Endothelial cell of umbilical vein (primary cell): ENCODE measurements at regions of chr3 and their contacts with region 1.

Region 1: DNA sequence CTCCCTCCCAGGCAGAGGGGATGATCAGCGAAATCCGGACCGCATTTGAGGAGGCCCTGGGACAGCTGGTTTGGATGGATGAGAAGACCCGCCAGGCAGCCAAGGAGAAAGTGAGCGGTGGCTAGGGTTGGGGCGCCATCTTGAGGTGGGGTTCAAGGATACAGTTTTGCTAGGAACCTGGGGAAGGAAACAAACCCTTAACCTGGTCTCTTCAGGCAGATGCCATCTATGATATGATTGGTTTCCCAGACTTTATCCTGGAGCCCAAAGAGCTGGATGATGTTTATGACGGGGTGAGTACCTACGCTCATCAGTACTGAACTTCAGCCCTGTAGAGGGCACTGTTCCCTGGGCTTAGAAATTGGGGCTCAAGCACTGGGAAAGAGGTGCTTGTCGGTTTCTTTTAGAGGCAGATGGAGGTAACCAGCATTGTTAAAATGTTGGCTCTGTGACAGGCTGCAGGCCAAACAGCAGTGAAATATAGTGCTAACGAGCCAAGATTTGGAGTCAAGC is 9.6 kb upstream of the PSMD2 start:
- DNase-seq: peak; percentile 52
- H3K4me3 ChIP-seq: no peak overlapping the region
- H3K27ac ChIP-seq: no peak overlapping the region
- H3K4me1 ChIP-seq: no peaks in the 10 kb centered on the region
- H3K27me3 ChIP-seq: peaks cover 0 to 3% of the 10 kb centered on the region in 2 experiments
- CTCF ChIP-seq: peak; percentile 67
- POLR2A ChIP-seq: no peak

Region 2: DNA sequence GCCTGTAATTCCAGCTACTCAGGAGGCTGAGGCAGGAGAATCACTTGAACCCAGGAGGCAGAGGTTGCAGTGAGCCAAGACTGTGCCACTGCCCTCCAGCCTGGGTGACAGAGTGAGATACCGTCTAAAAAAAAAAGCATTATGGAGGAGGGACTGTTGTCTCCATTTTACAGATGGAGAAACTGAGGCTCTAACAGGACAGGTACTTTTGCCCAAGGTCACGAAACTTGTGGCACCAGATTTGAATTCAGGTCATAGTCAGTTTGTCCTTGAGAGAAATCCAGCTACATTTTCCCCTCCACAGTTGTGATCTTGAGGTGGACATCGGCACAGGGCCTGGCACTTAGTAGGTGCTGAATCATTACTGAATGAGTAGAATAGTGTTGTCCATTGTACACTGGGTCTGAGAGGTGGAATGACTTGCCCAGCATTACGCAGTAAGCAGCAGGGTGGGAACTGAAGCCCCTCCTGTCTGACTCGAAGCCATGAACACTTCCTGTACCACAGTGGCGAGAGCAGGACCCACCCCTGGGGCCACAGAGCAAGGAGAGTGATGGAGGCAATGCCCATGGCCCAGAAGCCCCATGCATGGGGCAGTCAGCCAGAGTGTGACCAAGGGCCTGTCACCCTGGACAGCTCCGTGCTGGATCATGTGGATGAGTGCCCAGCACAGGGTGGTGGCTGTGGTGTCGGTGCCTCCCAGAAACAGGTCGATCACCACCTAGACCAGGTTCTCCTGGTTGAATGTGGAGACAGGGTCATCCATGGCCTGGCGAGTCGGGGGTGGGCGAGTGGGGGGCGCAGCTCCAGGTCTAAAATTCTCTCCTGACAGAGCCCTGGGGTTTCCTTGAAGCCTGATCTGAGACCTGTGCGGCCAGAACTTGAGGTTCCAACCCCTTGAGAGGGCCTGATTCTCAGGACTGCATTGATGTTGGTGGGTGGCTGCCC is 384.4 kb before region 1 on chr3:
- CTCF ChIA-PET with region 1: interaction called, 11 read pairs
- POLR2A ChIA-PET with region 1: no interaction called
- dilution Hi-C with region 1: no loop called
- intact Hi-C with region 1: no loop called
- DNase-seq: no peak
- H3K4me3 ChIP-seq: no peak overlapping the region
- H3K27ac ChIP-seq: no peak overlapping the region
- H3K4me1 ChIP-seq: no peaks in the 10 kb centered on the region
- H3K27me3 ChIP-seq: no peaks in the 10 kb centered on the region
- CTCF ChIP-seq: no peak
- POLR2A ChIP-seq: no peak

Region 3: GRCh38 chr3:183966251-183966801 is 323.2 kb before region 1 on chr3:
- CTCF ChIA-PET with region 1: no interaction called
- POLR2A ChIA-PET with region 1: no interaction called
- dilution Hi-C with region 1: no loop called
- intact Hi-C with region 1: no loop called
- DNase-seq: no peak
- H3K4me3 ChIP-seq: no peak overlapping the region
- H3K27ac ChIP-seq: no peak overlapping the region
- H3K4me1 ChIP-seq: no peaks in the 10 kb centered on the region
- H3K27me3 ChIP-seq: no peaks in the 10 kb centered on the region
- CTCF ChIP-seq: no peak
- POLR2A ChIP-seq: no peak

Region 4: GRCh38 chr3:184040010-184040409 is 249.5 kb before region 1 on chr3:
- CTCF ChIA-PET with region 1: no interaction called
- POLR2A ChIA-PET with region 1: no interaction called
- dilution Hi-C with region 1: no loop called
- intact Hi-C with region 1: loop called (anchors 10 kb)
- DNase-seq: peak; percentile 22
- H3K4me3 ChIP-seq: no peak overlapping the region
- H3K27ac ChIP-seq: no peak overlapping the region
- H3K4me1 ChIP-seq: no peaks in the 10 kb centered on the region
- H3K27me3 ChIP-seq: peaks cover 5 to 7% of the 10 kb centered on the region in 2 experiments
- CTCF ChIP-seq: peak; percentile 38 to 44
- POLR2A ChIP-seq: no peak

Region 5: GRCh38 chr3:184145111-184145524 is 144.4 kb before region 1 on chr3:
- CTCF ChIA-PET with region 1: interaction called, 5 read pairs
- POLR2A ChIA-PET with region 1: no interaction called
- dilution Hi-C with region 1: no loop called
- intact Hi-C with region 1: loop called (anchors 2 kb)
- DNase-seq: peak; percentile 39
- H3K4me3 ChIP-seq: no peak overlapping the region
- H3K27ac ChIP-seq: no peak overlapping the region
- H3K4me1 ChIP-seq: no peaks in the 10 kb centered on the region
- H3K27me3 ChIP-seq: no peaks in the 10 kb centered on the region
- CTCF ChIP-seq: peak; percentile 31 to 36
- POLR2A ChIP-seq: no peak

Region 6: GRCh38 chr3:184505076-184505878 is 215.8 kb after region 1 on chr3:
- CTCF ChIA-PET with region 1: no interaction called
- POLR2A ChIA-PET with region 1: no interaction called
- dilution Hi-C with region 1: no loop called
- intact Hi-C with region 1: no loop called
- DNase-seq: no peak
- H3K4me3 ChIP-seq: no peak overlapping the region
- H3K27ac ChIP-seq: no peak overlapping the region
- H3K4me1 ChIP-seq: peaks cover 3% of the 10 kb centered on the region
- H3K27me3 ChIP-seq: peaks cover 13 to 18% of the 10 kb centered on the region in 2 experiments
- CTCF ChIP-seq: no peak
- POLR2A ChIP-seq: no peak